Activated CD4-positive, alpha-beta memory T cell treated with anti-CD3 and anti-CD28 coated beads for 36 hours (primary cell): ENCODE measurements at regions of chr7 and their contacts with region 1.

Region 1: GRCh38 chr7:50092579-50093491 is at the start of gene ZPBP:
- DNase-seq: peak; percentile 59
- H3K4me3 Mint-ChIP-seq: peak within 1 kb of the TSS; percentile 75
- H3K27ac Mint-ChIP-seq: peak within 1 kb of the TSS; percentile 62
- H3K4me1 Mint-ChIP-seq: peaks cover 8% of the 10 kb centered on the region
- H3K27me3 Mint-ChIP-seq: no peaks in the 10 kb centered on the region
- total RNA-seq, gene ZPBP: not detected

Region 2: GRCh38 chr7:49731836-49732235 is 361.0 kb before region 1 on chr7:
- CTCF ChIA-PET with region 1: no interaction called
- POLR2A ChIA-PET with region 1: no interaction called
- intact Hi-C with region 1: no loop called
- DNase-seq: no peak
- H3K4me3 Mint-ChIP-seq: no peak overlapping the region
- H3K27ac Mint-ChIP-seq: no peak overlapping the region
- H3K4me1 Mint-ChIP-seq: no peaks in the 10 kb centered on the region
- H3K27me3 Mint-ChIP-seq: no peaks in the 10 kb centered on the region

Region 3: GRCh38 chr7:50068961-50069551 is 23.8 kb before region 1 on chr7:
- CTCF ChIA-PET with region 1: interaction called, 7 read pairs
- POLR2A ChIA-PET with region 1: no interaction called
- intact Hi-C with region 1: loop called (anchors 1 kb)
- DNase-seq: peak; percentile 46
- H3K4me3 Mint-ChIP-seq: peak overlapping the region; percentile 85
- H3K27ac Mint-ChIP-seq: peak overlapping the region; percentile 46
- H3K4me1 Mint-ChIP-seq: peaks cover 19% of the 10 kb centered on the region
- H3K27me3 Mint-ChIP-seq: no peaks in the 10 kb centered on the region

Region 4: GRCh38 chr7:50142425-50143017 is 49.7 kb after region 1 on chr7:
- CTCF ChIA-PET with region 1: interaction called, 22 read pairs
- POLR2A ChIA-PET with region 1: no interaction called
- intact Hi-C with region 1: loop called (anchors 1 kb)
- DNase-seq: no peak
- H3K4me3 Mint-ChIP-seq: peak overlapping the region; percentile 14
- H3K27ac Mint-ChIP-seq: peak overlapping the region; percentile 59
- H3K4me1 Mint-ChIP-seq: peaks cover 28% of the 10 kb centered on the region
- H3K27me3 Mint-ChIP-seq: peaks cover 2% of the 10 kb centered on the region

Region 5: DNA sequence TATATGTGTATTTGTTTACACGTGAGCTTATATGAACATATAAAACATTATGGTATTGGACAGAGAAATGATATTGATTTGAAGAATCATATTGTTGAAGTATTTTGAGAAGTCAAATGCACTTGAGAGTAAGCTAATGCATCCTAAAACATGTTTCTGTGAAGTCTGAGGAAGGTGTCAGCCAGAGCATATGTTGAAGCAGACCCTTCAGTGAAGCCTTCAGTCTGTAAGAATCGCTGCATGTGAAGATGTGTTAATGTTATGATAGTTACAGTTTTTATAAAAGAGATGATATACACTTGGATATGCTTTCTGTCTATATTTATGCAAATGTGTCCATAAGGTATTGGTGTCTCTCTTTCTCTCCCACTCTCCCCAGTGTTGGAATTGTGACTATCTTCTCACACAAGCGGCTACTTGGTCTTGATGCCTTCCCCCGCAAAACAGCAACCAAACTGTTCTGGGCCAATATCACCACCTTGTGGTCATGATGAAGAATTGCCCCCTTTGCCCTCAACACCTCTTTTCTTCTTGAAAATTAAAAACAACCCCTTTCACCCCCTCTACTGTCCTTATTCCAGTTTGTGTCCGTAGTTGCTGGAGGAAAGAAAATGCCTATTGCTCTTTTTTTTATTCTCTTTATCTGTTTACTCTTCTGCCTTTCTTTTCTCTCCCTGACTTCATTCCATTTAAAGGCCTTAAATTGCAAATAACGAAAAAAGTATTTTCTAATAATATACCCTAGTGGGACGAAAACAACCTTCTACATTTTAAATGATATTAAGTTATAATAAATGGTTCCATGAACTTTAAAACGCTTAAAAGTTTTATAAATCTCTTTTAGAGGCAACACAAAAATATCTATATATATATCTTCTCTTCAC is 276.6 kb after region 1 on chr7:
- CTCF ChIA-PET with region 1: interaction called, 11 read pairs
- POLR2A ChIA-PET with region 1: no interaction called
- intact Hi-C with region 1: no loop called
- DNase-seq: peak; percentile 56
- H3K4me3 Mint-ChIP-seq: no peak overlapping the region
- H3K27ac Mint-ChIP-seq: peak overlapping the region; percentile 93
- H3K4me1 Mint-ChIP-seq: peaks cover 97% of the 10 kb centered on the region
- H3K27me3 Mint-ChIP-seq: no peaks in the 10 kb centered on the region

Region 6: DNA sequence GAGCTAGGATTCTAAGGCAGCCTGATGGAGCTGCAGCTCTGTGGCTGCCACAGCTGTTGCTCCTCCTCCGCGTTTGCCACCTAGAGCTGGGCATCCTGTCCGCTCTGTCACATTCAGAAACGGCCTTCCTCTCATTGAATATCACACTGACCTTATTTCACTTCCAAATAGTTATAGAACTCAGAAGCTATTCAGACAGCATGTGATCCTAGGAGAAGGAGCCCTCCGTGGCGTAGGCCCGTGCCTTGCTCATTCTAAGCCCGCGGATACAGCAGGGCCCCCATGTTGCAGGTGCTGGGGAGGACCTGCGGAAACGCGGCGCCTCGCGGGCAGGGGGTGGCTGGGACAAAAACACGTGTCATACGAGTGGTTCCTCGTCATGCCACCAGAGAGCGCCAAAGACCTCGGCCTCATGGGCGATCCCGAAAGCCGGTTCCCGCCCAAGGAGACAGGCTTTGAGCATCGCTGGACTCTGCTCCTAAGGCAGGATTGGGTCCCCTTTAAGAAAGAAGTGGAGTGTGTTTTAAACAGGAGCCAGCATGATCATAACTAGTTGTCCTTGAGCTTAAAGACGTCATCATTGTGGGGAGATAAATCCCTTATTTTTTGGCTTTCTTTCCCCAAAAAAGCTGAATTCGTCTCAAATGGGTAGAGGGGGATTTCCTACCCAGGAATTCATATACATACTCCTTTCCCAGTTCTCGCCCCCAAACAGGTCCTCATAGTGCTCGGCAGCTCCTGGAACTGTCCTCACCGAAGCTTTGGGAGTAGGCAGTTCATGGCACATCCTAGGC is 375.2 kb after region 1 on chr7:
- CTCF ChIA-PET with region 1: interaction called, 23 read pairs
- POLR2A ChIA-PET with region 1: no interaction called
- intact Hi-C with region 1: loop called (anchors 1 kb)
- DNase-seq: peak; percentile 89
- H3K4me3 Mint-ChIP-seq: no peak overlapping the region
- H3K27ac Mint-ChIP-seq: no peak overlapping the region
- H3K4me1 Mint-ChIP-seq: peaks cover 12% of the 10 kb centered on the region
- H3K27me3 Mint-ChIP-seq: peaks cover 2% of the 10 kb centered on the region

Region 7: DNA sequence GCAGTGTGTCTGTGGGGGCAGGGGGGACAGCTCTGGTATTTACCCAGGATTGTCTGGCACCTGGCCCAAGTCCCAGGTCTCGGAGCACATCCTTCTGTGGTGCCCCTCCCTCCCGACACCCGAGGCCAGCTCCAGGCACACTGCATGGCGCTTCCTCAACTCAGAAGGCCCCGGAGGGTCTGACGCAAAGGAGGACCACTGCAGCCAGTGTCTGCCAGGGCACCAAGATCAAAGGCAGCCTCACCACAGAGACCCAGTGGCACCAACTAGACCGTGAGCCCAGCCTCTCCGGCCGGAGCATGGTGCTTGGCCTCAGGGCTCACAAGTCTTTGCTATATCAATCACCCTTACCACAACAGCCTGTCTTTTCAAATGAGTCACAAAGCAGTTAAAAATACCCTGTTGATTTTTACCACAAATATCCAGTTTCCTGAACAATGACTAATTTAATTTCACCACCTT is 571.7 kb after region 1 on chr7:
- CTCF ChIA-PET with region 1: interaction called, 4 read pairs
- POLR2A ChIA-PET with region 1: no interaction called
- intact Hi-C with region 1: loop called (anchors 5 kb)
- DNase-seq: peak; percentile 60
- H3K4me3 Mint-ChIP-seq: no peak overlapping the region
- H3K27ac Mint-ChIP-seq: no peak overlapping the region
- H3K4me1 Mint-ChIP-seq: peaks cover 66% of the 10 kb centered on the region
- H3K27me3 Mint-ChIP-seq: peaks cover 2% of the 10 kb centered on the region

Region 8: DNA sequence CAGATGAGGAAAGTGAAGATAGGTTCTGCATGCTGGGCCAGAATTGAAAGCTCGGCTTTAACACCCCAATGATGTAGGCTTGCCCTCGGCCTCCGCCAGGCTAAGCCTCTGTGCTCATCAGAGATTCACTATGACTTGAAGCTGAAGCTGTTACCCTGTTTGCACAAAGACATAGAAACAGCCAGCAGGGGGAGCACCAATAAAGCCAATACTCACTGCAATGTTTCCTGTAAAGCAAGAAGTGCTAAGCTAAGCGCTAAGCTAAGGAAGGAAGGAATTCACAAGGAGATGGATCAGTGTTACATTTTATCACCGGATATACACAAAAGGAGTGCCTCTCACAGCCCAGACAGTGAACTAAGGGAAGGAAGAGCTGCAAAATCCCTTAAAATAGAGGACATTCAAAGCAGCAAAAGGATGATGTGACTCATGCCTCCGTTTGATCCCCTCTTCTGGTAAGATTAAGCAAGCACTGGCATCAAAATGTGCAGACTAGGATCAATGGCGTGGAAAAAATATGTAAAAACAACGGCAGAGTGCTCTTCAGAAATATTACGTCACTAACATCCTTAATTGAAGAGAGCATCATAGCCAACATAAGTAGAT is 1070.0 kb after region 1 on chr7:
- CTCF ChIA-PET with region 1: interaction called, 26 read pairs
- POLR2A ChIA-PET with region 1: no interaction called
- intact Hi-C with region 1: loop called (anchors 10 kb)
- DNase-seq: peak; percentile 84
- H3K4me3 Mint-ChIP-seq: no peak overlapping the region
- H3K27ac Mint-ChIP-seq: no peak overlapping the region
- H3K4me1 Mint-ChIP-seq: peaks cover 10% of the 10 kb centered on the region
- H3K27me3 Mint-ChIP-seq: peaks cover 21% of the 10 kb centered on the region